Panc1 (cell line): ENCODE measurements at regions of chr6 and their contacts with region 1.

Region 1: DNA sequence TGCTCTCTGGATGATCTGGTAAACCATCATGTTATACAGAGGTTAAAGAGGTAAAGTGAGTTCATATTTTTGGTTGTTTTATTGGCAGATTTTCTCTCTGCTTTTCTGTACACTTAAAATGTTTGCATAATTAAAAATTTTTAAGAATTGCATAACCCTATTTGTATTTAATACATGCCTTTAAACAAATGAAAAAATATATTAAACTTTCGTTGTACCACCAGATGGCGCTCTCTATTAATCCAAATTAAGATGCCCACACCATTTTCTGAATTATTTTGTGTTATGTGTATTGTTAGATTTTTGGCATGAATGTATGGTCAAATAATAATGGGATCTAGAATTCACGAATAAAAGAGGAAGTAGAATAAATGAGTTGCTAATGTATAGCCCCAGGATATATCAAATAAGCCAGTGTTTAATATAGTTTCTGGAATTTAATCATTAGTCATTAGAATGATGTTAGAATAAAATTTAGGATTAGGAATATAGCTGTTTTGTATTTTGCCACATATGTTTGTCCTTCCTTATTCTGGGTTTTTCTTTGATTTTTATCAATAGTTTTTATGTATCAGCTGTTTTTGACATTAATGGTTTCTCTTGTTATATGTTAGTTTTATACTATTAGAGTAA is 38.9 kb downstream of the SMAP1 start:
- DNase-seq: peak; percentile 20
- ATAC-seq: no peak
- H3K4me3 ChIP-seq: no peak overlapping the region
- H3K27ac ChIP-seq: no peak overlapping the region
- H3K4me1 ChIP-seq: no peaks in the 10 kb centered on the region
- H3K27me3 ChIP-seq: no peaks in the 10 kb centered on the region
- CTCF ChIP-seq: peak; percentile 68; the same call in 1 of the 2 replicates

Region 2: GRCh38 chr6:70667256-70667710 is 39.3 kb before region 1 on chr6:
- CTCF ChIA-PET with region 1: no interaction called
- POLR2A ChIA-PET with region 1: no interaction called
- in situ Hi-C with region 1: no loop called
- intact Hi-C with region 1: no loop called
- DNase-seq: peak; percentile 78
- ATAC-seq: no peak
- H3K4me3 ChIP-seq: peak overlapping the region; percentile 73 to 89
- H3K27ac ChIP-seq: peak overlapping the region; percentile 94
- H3K4me1 ChIP-seq: peaks cover 25% of the 10 kb centered on the region
- H3K27me3 ChIP-seq: no peaks in the 10 kb centered on the region
- CTCF ChIP-seq: no peak

Region 3: GRCh38 chr6:70884074-70884983 is 177.7 kb after region 1 on chr6:
- CTCF ChIA-PET with region 1: interaction called, 20 read pairs
- POLR2A ChIA-PET with region 1: no interaction called
- in situ Hi-C with region 1: no loop called
- intact Hi-C with region 1: loop called (anchors 1 kb)
- DNase-seq: peak; percentile 32
- ATAC-seq: peak; percentile 94
- H3K4me3 ChIP-seq: no peak overlapping the region
- H3K27ac ChIP-seq: no peak overlapping the region
- H3K4me1 ChIP-seq: peaks cover 4% of the 10 kb centered on the region; the same call in 1 of the 2 replicates
- H3K27me3 ChIP-seq: no peaks in the 10 kb centered on the region; the same call in 1 of the 2 replicates
- CTCF ChIP-seq: peak; percentile 97